ENCODE measurements at regions of chr10 and their contacts with region 1.

Region 1: GRCh38 chr10:110137142-110137545 is 70.3 kb upstream of the MXI1 start:
- DNase-seq: peak; percentile 82
- ATAC-seq: peak; percentile 67
- H3K4me3 ChIP-seq: no peak overlapping the region
- H3K4me3 Mint-ChIP-seq: peak overlapping the region; percentile 18
- H3K27ac ChIP-seq: peak overlapping the region; percentile 11 to 58
- H3K27ac Mint-ChIP-seq: peak overlapping the region; percentile 47
- H3K4me1 ChIP-seq: peaks cover 20 to 26% of the 10 kb centered on the region in 2 donors
- H3K4me1 Mint-ChIP-seq: peaks cover 37% of the 10 kb centered on the region
- H3K27me3 ChIP-seq: no peaks in the 10 kb centered on the region
- H3K27me3 Mint-ChIP-seq: no peaks in the 10 kb centered on the region
- CTCF ChIP-seq: peak; percentile 85

Region 2: DNA sequence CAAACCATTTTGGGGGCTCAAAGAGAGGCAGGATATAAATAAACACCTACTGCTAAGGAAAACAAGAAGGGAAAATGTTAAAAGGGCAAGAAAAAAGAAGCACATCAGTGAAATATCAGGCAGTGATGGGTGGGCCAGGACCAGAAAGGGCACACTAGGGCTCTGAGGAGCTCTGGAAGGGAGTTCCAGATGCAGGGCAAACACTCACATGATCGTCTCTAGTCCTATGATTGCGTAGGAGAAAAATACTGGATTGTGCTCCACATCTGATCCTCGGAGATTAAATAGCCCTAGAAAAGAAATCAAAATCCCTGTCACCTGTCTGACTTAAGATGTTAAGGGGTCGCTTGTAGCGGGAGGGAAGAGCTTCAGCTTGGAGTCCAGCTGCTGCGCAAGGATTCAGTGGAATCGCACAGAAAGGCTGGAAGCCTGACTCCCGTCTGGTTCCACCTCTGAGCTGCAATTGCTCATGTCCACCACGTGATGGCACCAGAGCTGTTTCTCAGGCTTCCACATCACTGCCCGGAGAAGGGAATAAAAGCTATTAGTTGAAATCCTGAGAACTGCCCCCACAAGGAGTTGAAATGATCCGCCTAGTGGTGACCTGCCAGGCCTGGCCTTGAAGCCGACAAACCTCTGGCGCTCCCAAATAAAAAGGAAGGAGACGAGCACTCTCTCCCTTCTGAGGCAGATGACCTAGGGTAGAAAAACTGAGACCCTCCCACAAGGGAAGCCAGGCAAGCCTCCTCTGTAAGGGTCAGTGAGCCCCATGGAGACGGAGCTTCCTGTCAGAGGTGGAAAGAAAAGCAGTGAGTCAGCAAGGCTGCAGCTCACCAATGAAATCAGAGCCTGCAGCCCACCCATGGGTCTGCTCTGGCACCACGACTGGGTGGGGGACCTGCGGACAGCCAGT is 253.0 kb before region 1 on chr10:
- CTCF ChIA-PET with region 1: interaction called, 10 read pairs
- POLR2A ChIA-PET with region 1: no interaction called
- intact Hi-C with region 1: loop called (anchors 1 kb)
- DNase-seq: peak; percentile 70
- ATAC-seq: peak; percentile 76
- H3K4me3 ChIP-seq: no peak overlapping the region
- H3K4me3 Mint-ChIP-seq: no peak overlapping the region
- H3K27ac ChIP-seq: no peak overlapping the region
- H3K27ac Mint-ChIP-seq: peak overlapping the region; percentile 46
- H3K4me1 ChIP-seq: no peaks in the 10 kb centered on the region
- H3K4me1 Mint-ChIP-seq: peaks cover 4% of the 10 kb centered on the region
- H3K27me3 ChIP-seq: no peaks in the 10 kb centered on the region
- H3K27me3 Mint-ChIP-seq: no peaks in the 10 kb centered on the region
- CTCF ChIP-seq: peak; percentile 98

Region 3: GRCh38 chr10:110210674-110211464 is 73.7 kb after region 1 on chr10:
- CTCF ChIA-PET with region 1: interaction called, 25 read pairs
- POLR2A ChIA-PET with region 1: interaction called, 4 read pairs
- intact Hi-C with region 1: loop called (anchors 1 kb)
- DNase-seq: peak; percentile 94
- ATAC-seq: peak; percentile 68
- H3K4me3 ChIP-seq: peak overlapping the region; percentile 67 to 90 (median 82)
- H3K4me3 Mint-ChIP-seq: peak overlapping the region; percentile 88
- H3K27ac ChIP-seq: peak overlapping the region; percentile 82 to 85
- H3K27ac Mint-ChIP-seq: peak overlapping the region; percentile 97
- H3K4me1 ChIP-seq: peaks cover 44 to 67% of the 10 kb centered on the region in 2 donors
- H3K4me1 Mint-ChIP-seq: peaks cover 58% of the 10 kb centered on the region
- H3K27me3 ChIP-seq: peaks cover 0 to 18% (median 7%) of the 10 kb centered on the region in 4 experiments
- H3K27me3 Mint-ChIP-seq: peaks cover 4% of the 10 kb centered on the region
- CTCF ChIP-seq: no peak

Region 4: GRCh38 chr10:110279407-110279986 is 142.4 kb after region 1 on chr10:
- CTCF ChIA-PET with region 1: interaction called, 98 read pairs
- POLR2A ChIA-PET with region 1: no interaction called
- intact Hi-C with region 1: loop called (anchors 1 kb)
- DNase-seq: peak; percentile 79
- ATAC-seq: peak; percentile 68
- H3K4me3 ChIP-seq: peak overlapping the region in 1 of 5 experiments; percentile 38
- H3K4me3 Mint-ChIP-seq: peak overlapping the region; percentile 26
- H3K27ac ChIP-seq: no peak overlapping the region
- H3K27ac Mint-ChIP-seq: no peak overlapping the region
- H3K4me1 ChIP-seq: peaks cover 11 to 17% of the 10 kb centered on the region in 2 donors
- H3K4me1 Mint-ChIP-seq: peaks cover 21% of the 10 kb centered on the region
- H3K27me3 ChIP-seq: no peaks in the 10 kb centered on the region
- H3K27me3 Mint-ChIP-seq: no peaks in the 10 kb centered on the region
- CTCF ChIP-seq: peak; percentile 84

Region 5: DNA sequence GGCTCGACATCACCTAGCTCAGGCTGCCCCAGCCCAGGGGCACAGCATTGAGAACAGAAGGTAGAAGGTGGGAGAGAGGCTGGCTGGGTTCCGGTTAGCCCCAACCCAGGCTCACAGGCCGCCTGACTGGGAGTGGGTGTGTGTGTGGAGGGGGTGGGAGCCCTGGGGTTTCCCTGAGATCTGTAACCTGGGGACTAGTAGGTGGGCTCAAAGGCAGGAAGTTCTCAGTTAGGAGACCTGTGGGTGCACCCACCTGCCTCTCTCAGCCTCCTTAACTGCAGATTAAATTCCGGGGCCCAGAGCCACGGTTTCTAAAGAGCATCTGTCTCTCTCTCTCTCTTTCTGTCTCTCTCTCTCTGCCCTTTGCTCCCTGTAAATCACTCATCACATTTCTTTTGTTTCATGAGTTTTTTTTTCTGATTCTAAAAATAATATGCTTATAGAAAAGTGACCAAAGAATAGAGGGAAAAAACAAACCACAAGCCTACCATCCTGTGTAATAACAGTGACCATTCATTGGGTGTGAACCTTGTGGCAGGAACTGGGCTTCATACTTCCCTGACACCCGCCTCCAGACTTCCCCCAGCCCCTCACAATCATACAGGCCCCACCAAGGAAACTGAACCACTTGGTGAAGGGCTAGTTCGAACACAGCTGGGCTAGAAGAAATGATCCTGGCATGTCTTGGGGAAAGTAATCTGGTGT is 251.0 kb after region 1 on chr10:
- CTCF ChIA-PET with region 1: no interaction called
- POLR2A ChIA-PET with region 1: no interaction called
- intact Hi-C with region 1: no loop called
- DNase-seq: no peak
- ATAC-seq: no peak
- H3K4me3 ChIP-seq: no peak overlapping the region
- H3K4me3 Mint-ChIP-seq: no peak overlapping the region
- H3K27ac ChIP-seq: no peak overlapping the region
- H3K27ac Mint-ChIP-seq: no peak overlapping the region
- H3K4me1 ChIP-seq: peaks cover 6 to 11% of the 10 kb centered on the region in 2 donors
- H3K4me1 Mint-ChIP-seq: peaks cover 14% of the 10 kb centered on the region
- H3K27me3 ChIP-seq: no peaks in the 10 kb centered on the region
- H3K27me3 Mint-ChIP-seq: peaks cover 25% of the 10 kb centered on the region
- CTCF ChIP-seq: no peak

Region 6: DNA sequence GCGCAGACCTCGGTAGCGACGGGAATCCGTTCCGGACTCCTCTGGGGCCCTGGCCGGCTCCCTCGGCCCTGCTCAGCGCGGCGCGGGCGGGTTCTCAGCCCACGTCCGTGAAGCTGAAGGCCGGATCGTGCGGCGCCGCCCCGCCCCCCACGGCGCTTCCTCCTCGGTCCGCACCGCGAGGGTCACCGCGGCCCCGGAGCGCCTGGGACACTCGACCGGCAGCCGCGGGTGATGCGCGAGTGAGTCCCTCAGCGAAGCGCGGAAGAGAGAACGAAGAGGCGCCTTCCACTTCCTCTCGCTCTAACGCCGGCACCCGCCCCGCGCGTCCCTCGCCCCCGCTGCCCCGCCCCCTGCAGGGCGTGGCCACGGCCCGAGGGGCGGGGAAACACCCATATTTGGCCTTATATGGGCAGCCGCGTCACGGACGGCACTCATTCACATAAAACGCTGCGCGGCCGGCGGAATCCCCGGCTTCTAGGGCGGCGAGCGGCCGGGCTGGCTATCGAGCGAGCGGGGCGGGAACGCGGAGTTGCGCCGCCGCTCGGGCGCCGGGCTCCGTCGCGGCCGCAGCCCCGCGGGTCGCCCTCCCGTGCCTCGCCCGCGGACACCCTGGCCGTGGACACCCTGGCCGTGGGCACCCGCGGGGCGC is 360.4 kb after region 1 on chr10 and contains the start of gene DUSP5:
- CTCF ChIA-PET with region 1: no interaction called
- POLR2A ChIA-PET with region 1: no interaction called
- intact Hi-C with region 1: loop called (anchors 5 kb)
- DNase-seq: peak; percentile 99
- ATAC-seq: peak; percentile 91
- H3K4me3 ChIP-seq: peak within 1 kb of the TSS in 4 of 5 experiments; percentile 57 to 71 (median 62)
- H3K4me3 Mint-ChIP-seq: peak within 1 kb of the TSS; percentile 93
- H3K27ac ChIP-seq: peak within 1 kb of the TSS; percentile 65 to 80
- H3K27ac Mint-ChIP-seq: peak within 1 kb of the TSS; percentile 93
- H3K4me1 ChIP-seq: peaks cover 35 to 51% of the 10 kb centered on the region in 2 donors
- H3K4me1 Mint-ChIP-seq: peaks cover 56% of the 10 kb centered on the region
- H3K27me3 ChIP-seq: peaks cover 0 to 14% (median 2%) of the 10 kb centered on the region in 4 experiments
- H3K27me3 Mint-ChIP-seq: peaks cover 6% of the 10 kb centered on the region
- CTCF ChIP-seq: no peak
- total RNA-seq, gene DUSP5: 10.0 and 10.8 TPM in 2 replicates

Region 7: GRCh38 chr10:110600487-110601101 is 463.4 kb after region 1 on chr10:
- CTCF ChIA-PET with region 1: interaction called, 6 read pairs
- POLR2A ChIA-PET with region 1: no interaction called
- intact Hi-C with region 1: loop called (anchors 5 kb)
- DNase-seq: peak; percentile 66
- ATAC-seq: peak; percentile 57
- H3K4me3 ChIP-seq: no peak overlapping the region
- H3K4me3 Mint-ChIP-seq: no peak overlapping the region
- H3K27ac ChIP-seq: no peak overlapping the region
- H3K27ac Mint-ChIP-seq: no peak overlapping the region
- H3K4me1 ChIP-seq: no peaks in the 10 kb centered on the region
- H3K4me1 Mint-ChIP-seq: no peaks in the 10 kb centered on the region
- H3K27me3 ChIP-seq: no peaks in the 10 kb centered on the region
- H3K27me3 Mint-ChIP-seq: no peaks in the 10 kb centered on the region
- CTCF ChIP-seq: peak; percentile 75